ENCODE measurements at regions of chr4 and their contacts with region 1.

Region 1: GRCh38 chr4:159102622-159103383 is at the start of gene RAPGEF2:
- DNase-seq: peak; percentile 65 to 95
- H3K4me3 ChIP-seq: peak within 1 kb of the TSS; percentile 92 to 93
- H3K27ac ChIP-seq: peak within 1 kb of the TSS; percentile 91 to 94
- H3K4me1 ChIP-seq: peaks cover 0 to 13% of the 10 kb centered on the region in 2 donors
- H3K27me3 ChIP-seq: no peaks in the 10 kb centered on the region
- CTCF ChIP-seq: no peak
- total RNA-seq, gene RAPGEF2: 65.7 TPM

Region 2: GRCh38 chr4:158722917-158723793 is 379.6 kb before region 1 on chr4 and contains the start of gene PPID:
- intact Hi-C with region 1: loop called (anchors 2 kb)
- DNase-seq: peak; percentile 11 to 90
- H3K4me3 ChIP-seq: peak within 1 kb of the TSS; percentile 68 to 85
- H3K27ac ChIP-seq: peak within 1 kb of the TSS; percentile 84 to 92
- H3K4me1 ChIP-seq: peaks cover 0 to 13% of the 10 kb centered on the region in 2 donors
- H3K27me3 ChIP-seq: no peaks in the 10 kb centered on the region
- CTCF ChIP-seq: no peak
- total RNA-seq, gene PPID: 20.8 TPM

Region 3: GRCh38 chr4:158873795-158874401 is 228.9 kb before region 1 on chr4:
- intact Hi-C with region 1: loop called (anchors 5 kb)
- DNase-seq: no peak
- H3K4me3 ChIP-seq: no peak overlapping the region
- H3K27ac ChIP-seq: peak overlapping the region; percentile 31 to 46
- H3K4me1 ChIP-seq: peaks cover 5 to 24% of the 10 kb centered on the region in 2 donors
- H3K27me3 ChIP-seq: no peaks in the 10 kb centered on the region
- CTCF ChIP-seq: no peak

Region 4: GRCh38 chr4:159175085-159175988 is 72.5 kb after region 1 on chr4:
- intact Hi-C with region 1: loop called (anchors 2 kb)
- DNase-seq: peak in 1 of 2 donors; percentile 79
- H3K4me3 ChIP-seq: peak overlapping the region in 1 of 2 donors; percentile 33
- H3K27ac ChIP-seq: peak overlapping the region in 1 of 2 donors; percentile 44
- H3K4me1 ChIP-seq: peaks cover 6 to 30% of the 10 kb centered on the region in 2 donors
- H3K27me3 ChIP-seq: no peaks in the 10 kb centered on the region
- CTCF ChIP-seq: peak; percentile 75 to 86 (median 80)

Region 5: DNA sequence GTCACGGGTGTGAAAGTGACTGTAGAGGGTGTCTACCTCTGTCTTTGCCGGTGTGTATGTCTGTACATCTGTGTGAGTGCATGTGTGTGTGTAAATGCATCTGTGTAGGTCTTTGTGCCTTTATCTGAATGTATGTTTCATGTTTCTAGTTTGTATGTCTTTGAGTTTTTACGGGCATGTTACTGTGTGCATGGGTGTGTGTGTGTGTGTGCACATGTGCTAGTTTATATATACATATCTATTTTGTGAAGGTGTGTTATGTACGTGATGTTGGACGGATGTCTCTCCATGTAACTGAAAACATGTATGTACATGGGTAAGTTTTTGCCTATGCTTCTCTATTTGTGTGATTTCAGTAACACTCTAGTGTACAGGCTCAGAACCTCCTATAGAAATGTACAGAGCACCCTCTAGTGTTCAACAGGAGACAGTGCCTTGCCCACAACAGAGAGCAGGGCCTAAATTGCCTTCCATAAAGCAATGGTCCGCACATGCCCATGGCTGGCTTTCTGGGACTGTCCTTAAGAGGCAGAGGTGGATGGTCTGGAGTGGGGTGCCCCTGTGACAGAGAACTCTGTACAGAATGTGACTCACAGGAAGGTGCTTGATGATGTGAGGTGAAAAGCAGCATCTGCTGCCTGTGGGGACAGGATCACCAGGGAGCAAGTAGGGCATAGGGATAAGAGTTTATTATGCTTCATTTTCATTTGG is 343.6 kb after region 1 on chr4:
- intact Hi-C with region 1: loop called (anchors 10 kb)
- DNase-seq: peak in 1 of 2 donors; percentile 64
- H3K4me3 ChIP-seq: no peak overlapping the region
- H3K27ac ChIP-seq: no peak overlapping the region
- H3K4me1 ChIP-seq: peaks cover 0 to 2% of the 10 kb centered on the region in 2 donors
- H3K27me3 ChIP-seq: no peaks in the 10 kb centered on the region
- CTCF ChIP-seq: peak; percentile 74 to 90 (median 80)